ENCODE measurements at regions of chr9 and their contacts with region 1.

Region 1: GRCh38 chr9:127199001-127199791 is 65.4 kb upstream of the GARNL3 start:
- DNase-seq: peak; percentile 88
- CTCF ChIP-seq: peak; percentile 95

Region 2: GRCh38 chr9:126939821-126940221 is 259.4 kb before region 1 on chr9:
- in situ Hi-C with region 1: loop called (anchors 5 kb)
- DNase-seq: no peak
- CTCF ChIP-seq: no peak

Region 3: GRCh38 chr9:126965541-126966428 is 233.4 kb before region 1 on chr9:
- in situ Hi-C with region 1: loop called (anchors 10 kb)
- DNase-seq: peak; percentile 63
- CTCF ChIP-seq: peak; percentile 91

Region 4: GRCh38 chr9:127537792-127538191 is 338.6 kb after region 1 on chr9:
- in situ Hi-C with region 1: no loop called
- DNase-seq: peak; percentile 52
- CTCF ChIP-seq: peak; percentile 15